ENCODE measurements at regions of chr16 and their contacts with region 1.

Region 1: GRCh38 chr16:68237243-68238028 is 1.5 kb upstream of the ESRP2 start:
- DNase-seq: peak; percentile 93 to 99
- H3K4me3 ChIP-seq: peak overlapping the region; percentile 99
- H3K27ac ChIP-seq: peak overlapping the region; percentile 78
- H3K4me1 ChIP-seq: peaks cover 27% of the 10 kb centered on the region
- H3K27me3 ChIP-seq: no peaks in the 10 kb centered on the region
- CTCF ChIP-seq: no peak

Region 2: DNA sequence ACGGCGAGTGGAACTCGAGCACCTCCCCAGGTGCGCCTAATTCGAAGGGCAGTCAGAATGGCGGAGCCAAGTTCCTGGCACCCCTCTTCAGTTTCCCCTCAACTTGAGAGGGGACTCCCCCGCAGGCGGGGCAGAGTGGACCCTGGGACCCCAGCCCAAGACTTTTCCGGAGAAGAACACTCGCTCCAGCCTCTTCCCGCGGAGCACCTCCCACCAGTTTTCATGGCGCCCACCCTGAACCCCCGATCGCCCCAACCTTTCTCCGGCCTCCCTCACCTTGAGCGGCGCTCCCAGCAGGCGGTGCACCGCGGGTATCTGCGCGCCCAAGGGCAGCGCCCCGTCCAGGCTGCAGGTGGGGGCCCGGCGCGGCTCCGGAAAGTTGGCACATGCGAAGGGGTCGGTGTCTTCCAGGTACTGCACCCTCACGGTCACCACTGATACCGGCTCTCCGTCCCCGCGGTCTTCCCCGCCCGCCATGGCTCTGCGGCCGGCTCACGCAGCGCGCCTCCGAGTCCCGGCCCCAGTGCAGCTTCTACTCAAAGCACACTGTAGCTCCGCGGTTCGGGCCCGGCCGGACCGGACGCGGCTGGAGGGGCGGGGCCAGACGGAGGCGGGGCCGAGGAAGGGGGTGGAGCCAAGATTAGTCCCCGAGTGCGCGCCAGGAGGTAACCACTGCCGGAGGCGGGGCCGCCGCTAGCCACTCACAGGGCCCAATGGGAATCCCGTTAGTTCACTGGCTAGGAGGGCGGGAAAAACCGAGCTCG is 990.3 kb before region 1 on chr16 and contains the start of gene FHOD1:
- CTCF ChIA-PET with region 1: no interaction called
- POLR2A ChIA-PET with region 1: no interaction called
- intact Hi-C with region 1: loop called (anchors 10 kb)
- DNase-seq: peak; percentile 84 to 98
- H3K4me3 ChIP-seq: peak within 1 kb of the TSS; percentile 90
- H3K27ac ChIP-seq: peak within 1 kb of the TSS; percentile 76
- H3K4me1 ChIP-seq: peaks cover 45% of the 10 kb centered on the region
- H3K27me3 ChIP-seq: no peaks in the 10 kb centered on the region; the same call in 1 of the 2 replicates
- CTCF ChIP-seq: 0 out of 2 replicates have a peak, but pooled peaks have one; percentile 39
- total RNA-seq, gene FHOD1: 58.2 and 60.0 TPM in 2 replicates

Region 3: DNA sequence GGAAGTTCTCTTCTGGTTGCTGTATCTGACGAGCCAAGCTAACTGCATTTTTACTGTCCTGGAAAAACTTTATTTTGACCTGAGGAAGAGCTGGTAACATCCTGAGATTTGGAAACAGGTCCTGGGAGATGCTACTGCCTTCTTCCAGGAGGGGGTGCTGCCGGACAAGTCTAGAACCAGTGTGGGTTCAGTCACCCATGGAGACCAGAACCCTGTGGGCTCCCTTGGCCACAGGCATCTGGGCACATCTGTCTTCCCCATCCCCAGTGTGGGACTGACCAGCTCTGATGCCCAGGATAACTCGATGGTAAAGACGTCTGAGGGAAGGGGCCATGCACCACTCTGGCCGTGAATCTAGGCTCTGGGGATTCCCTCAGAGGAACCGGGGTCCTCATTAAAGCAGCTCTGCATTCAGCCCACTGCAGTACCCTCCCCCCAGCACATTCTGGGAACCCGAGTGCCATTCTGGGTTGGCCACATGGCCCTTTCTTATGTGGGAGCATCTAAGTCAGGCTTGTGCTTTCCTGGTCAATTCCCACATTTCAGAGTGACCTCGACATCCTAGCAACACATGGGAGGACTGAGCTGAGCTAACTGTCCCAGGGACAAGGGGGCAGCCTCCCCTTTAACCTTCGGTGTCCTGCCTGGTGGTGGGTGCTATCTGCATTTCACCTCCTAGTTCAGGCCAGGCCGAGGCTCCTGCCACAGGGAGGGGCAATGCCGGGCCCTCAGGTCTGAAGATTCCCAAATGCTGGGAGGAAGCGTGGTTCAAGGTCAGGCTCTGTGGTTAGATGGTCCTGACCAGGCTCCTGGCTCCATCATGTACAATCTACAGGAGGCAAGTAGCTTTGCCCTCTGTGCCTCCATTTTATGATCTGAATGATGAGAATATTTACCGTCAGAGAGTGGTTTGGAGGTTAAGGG is 564.4 kb before region 1 on chr16:
- CTCF ChIA-PET with region 1: no interaction called
- POLR2A ChIA-PET with region 1: no interaction called
- intact Hi-C with region 1: loop called (anchors 10 kb)
- DNase-seq: peak; percentile 39 to 67
- H3K4me3 ChIP-seq: no peak overlapping the region
- H3K27ac ChIP-seq: no peak overlapping the region
- H3K4me1 ChIP-seq: peaks cover 25% of the 10 kb centered on the region
- H3K27me3 ChIP-seq: no peaks in the 10 kb centered on the region
- CTCF ChIP-seq: peak; percentile 84

Region 4: GRCh38 chr16:68257906-68258800 is 20.7 kb after region 1 on chr16:
- CTCF ChIA-PET with region 1: interaction called, 8 read pairs
- POLR2A ChIA-PET with region 1: interaction called, 7 read pairs
- intact Hi-C with region 1: loop called (anchors 1 kb)
- DNase-seq: peak; percentile 80 to 96
- H3K4me3 ChIP-seq: no peak overlapping the region
- H3K27ac ChIP-seq: peak overlapping the region; percentile 73
- H3K4me1 ChIP-seq: peaks cover 29% of the 10 kb centered on the region
- H3K27me3 ChIP-seq: no peaks in the 10 kb centered on the region
- CTCF ChIP-seq: no peak

Region 5: DNA sequence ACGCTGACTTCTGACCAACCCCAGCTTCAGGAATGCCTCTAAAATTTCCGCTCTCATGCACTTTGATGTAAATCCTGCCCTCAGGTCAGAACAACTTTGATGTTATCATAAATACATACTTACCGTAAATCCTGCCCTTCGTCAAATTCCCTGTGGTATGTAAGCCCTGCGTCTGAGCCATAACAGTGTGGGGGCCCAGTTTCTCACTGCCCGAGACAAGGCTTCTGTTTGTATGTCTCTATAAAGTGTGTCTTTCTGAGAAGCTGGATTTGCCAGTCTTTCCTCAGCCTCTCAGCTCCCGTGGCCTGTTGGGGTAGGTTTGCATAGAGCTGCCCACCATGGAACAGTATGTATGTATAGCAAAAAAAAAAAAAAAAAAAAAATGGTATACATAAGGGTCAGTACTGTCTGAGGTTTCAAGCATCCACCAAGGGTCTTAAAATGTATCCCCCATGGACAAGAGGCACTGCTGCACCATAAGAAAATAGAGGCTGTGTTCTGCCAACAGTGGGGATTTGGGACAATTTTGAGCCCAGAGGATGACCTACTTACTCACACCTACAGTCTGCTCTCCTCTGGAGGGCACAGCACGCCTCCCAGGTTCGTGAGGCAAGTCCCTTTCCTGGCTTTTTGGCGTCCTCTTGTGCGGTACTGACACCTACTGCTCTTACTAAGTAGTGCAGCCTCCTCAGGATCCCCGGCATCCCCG is 90.9 kb after region 1 on chr16:
- CTCF ChIA-PET with region 1: interaction called, 6 read pairs
- POLR2A ChIA-PET with region 1: no interaction called
- intact Hi-C with region 1: loop called (anchors 2 kb)
- DNase-seq: peak; percentile 75 to 88
- H3K4me3 ChIP-seq: no peak overlapping the region
- H3K27ac ChIP-seq: 0 out of 2 replicates have a peak overlapping the region, but pooled peaks have one; percentile 25
- H3K4me1 ChIP-seq: peaks cover 6% of the 10 kb centered on the region
- H3K27me3 ChIP-seq: no peaks in the 10 kb centered on the region
- CTCF ChIP-seq: peak; percentile 91

Measured in PC-9 (cell line).